IMR-90 (cell line): ENCODE measurements at regions of chr12 and their contacts with region 1.

Region 1: DNA sequence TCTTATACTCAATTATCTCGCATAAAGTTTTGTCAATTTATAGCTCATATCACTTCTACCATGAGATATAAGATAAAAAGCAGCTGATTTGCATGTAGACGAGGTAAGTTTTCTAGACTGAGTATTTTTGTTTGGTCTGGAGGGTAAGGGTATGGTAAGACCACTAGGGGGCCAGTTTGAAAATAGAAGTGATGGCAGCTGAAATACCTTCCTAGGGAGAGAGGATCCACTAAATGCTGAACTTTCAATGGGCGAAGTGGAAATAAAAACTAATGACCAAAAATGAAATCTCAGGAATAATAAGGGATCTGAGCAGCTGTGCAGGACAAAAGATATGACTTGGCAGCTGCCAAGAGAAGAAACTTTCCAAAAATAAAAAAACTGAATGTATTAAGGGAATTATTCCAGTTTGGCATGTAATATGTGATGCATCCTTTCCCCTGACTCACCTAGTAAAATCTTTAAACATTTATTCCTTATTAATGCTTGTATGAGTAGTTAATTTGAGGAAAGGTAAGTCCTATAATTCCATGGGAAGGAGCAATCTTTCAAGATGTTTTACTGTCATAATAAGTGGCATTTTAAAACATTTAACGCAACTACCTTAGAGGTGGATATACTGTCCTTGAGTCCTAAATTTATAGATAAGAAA is 754.5 kb downstream of the C12orf50 start:
- DNase-seq: peak; percentile 38
- ATAC-seq: peak; percentile 55; the same call in 1 of the 2 replicates
- H3K4me3 ChIP-seq: no peak overlapping the region
- H3K27ac ChIP-seq: no peak overlapping the region
- H3K4me1 ChIP-seq: peaks cover 2% of the 10 kb centered on the region; the same call in 1 of the 2 replicates
- H3K27me3 ChIP-seq: no peaks in the 10 kb centered on the region
- CTCF ChIP-seq: peak; percentile 45
- POLR2A ChIP-seq: no peak
- RAD21 ChIP-seq: peak; percentile 44

Region 2: DNA sequence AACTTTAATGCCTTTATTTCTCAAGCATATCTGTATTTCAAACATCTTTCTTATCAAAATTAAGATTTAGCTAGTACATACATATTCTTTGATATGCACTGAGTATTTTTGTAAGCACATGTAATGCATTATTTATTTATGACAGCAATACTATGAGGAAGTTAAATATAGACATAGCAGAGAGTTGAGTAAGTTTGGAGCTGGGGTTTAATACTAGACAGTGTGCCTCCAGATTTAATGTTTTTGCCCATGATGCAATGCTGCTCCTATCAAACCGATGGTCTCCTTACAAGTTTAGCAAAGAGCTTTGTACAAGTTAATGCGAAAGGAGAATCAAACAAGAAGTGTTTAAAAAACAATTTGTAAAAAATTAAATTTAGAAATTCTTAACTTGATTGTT is 192.0 kb before region 1 on chr12:
- CTCF ChIA-PET with region 1: no interaction called
- POLR2A ChIA-PET with region 1: no interaction called
- dilution Hi-C with region 1: no loop called
- in situ Hi-C with region 1: no loop called
- intact Hi-C with region 1: no loop called
- DNase-seq: no peak
- ATAC-seq: no peak
- H3K4me3 ChIP-seq: no peak overlapping the region
- H3K27ac ChIP-seq: no peak overlapping the region
- H3K4me1 ChIP-seq: no peaks in the 10 kb centered on the region
- H3K27me3 ChIP-seq: no peaks in the 10 kb centered on the region
- CTCF ChIP-seq: no peak
- POLR2A ChIP-seq: no peak
- RAD21 ChIP-seq: no peak

Region 3: GRCh38 chr12:87953256-87953860 is 678.6 kb after region 1 on chr12:
- CTCF ChIA-PET with region 1: no interaction called
- POLR2A ChIA-PET with region 1: no interaction called
- dilution Hi-C with region 1: no loop called
- in situ Hi-C with region 1: no loop called
- intact Hi-C with region 1: loop called (anchors 1 kb)
- DNase-seq: peak; percentile 71
- ATAC-seq: peak; percentile 77
- H3K4me3 ChIP-seq: no peak overlapping the region
- H3K27ac ChIP-seq: no peak overlapping the region
- H3K4me1 ChIP-seq: no peaks in the 10 kb centered on the region
- H3K27me3 ChIP-seq: no peaks in the 10 kb centered on the region
- CTCF ChIP-seq: peak; percentile 86
- POLR2A ChIP-seq: no peak
- RAD21 ChIP-seq: peak; percentile 94